ENCODE measurements at regions of chr1 and their contacts with region 1.

Region 1: GRCh38 chr1:214328770-214329469 is 48.0 kb downstream of the SMYD2 start:
- DNase-seq: peak; percentile 82
- CTCF ChIP-seq: peak; percentile 96

Region 2: DNA sequence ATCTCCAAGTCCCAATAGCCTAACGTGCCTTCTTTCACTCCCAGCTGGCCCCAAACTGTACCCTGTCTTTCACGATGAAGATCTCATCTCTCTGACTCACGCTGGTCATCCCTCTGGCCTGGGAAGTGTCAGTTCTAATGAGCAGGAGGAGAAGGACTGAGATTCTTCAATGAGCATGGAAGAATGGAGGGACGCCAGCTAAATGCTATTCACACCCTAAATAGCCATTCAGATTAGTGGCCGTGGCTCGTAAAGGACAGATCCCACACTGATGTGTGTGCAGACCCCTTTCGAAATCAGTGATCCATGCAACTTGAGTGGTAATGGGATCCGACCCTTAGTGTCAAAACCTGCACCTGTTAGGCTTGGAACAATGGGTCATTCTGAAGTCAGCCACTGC is 123.9 kb before region 1 on chr1:
- CTCF ChIA-PET with region 1: interaction called, 30 read pairs
- POLR2A ChIA-PET with region 1: no interaction called
- DNase-seq: no peak
- CTCF ChIP-seq: no peak

Region 3: GRCh38 chr1:214261206-214262123 is 67.5 kb before region 1 on chr1:
- CTCF ChIA-PET with region 1: interaction called, 452 read pairs
- POLR2A ChIA-PET with region 1: no interaction called
- DNase-seq: peak; percentile 70
- CTCF ChIP-seq: peak; percentile 89

Region 4: DNA sequence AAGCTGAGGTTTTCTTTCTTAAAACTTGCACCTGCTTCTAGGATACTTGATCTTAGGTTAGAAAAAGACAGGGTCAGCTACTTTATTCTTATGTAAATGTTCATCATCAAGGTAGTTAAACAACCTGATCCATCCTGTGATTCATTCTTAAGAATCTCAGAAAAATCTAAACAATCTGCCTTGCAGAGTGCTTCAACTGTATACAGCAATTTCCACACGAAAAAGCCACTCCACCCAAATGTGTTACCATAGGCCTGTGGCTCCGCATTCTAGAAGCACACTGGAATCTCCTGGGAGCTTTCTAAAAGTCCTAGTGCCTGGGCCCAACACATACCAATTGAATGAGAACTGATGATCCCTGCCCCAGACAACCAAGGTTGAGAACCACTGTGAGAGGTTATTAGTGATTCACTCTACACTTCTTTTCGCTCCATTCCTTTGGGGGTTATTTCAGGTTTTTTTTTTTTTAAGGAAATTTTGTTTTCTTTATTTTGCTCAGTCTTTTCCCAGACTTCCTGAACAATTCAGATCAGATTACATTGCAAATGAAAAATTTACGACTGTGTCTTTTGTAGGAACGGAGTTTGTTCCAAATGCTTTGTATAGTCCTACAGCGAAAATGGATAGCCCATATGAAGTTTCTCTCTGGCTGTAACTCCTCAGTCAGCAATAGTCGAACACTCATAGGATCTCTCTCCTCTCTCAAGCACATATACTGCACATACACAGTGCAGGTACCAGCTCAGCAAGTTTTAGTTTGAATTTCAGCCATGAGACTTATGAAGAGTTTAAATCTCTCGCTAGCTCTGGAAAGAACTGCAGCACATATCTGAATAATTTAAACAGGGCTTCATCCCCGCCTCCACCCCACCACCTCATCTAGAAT is 31.8 kb before region 1 on chr1:
- CTCF ChIA-PET with region 1: interaction called, 13 read pairs
- POLR2A ChIA-PET with region 1: no interaction called
- DNase-seq: no peak
- CTCF ChIP-seq: no peak

Region 5: GRCh38 chr1:214377485-214377884 is 48.6 kb after region 1 on chr1:
- CTCF ChIA-PET with region 1: interaction called, 10 read pairs
- POLR2A ChIA-PET with region 1: no interaction called
- DNase-seq: no peak
- CTCF ChIP-seq: no peak

Region 6: GRCh38 chr1:214473387-214473786 is 144.5 kb after region 1 on chr1:
- CTCF ChIA-PET with region 1: no interaction called
- POLR2A ChIA-PET with region 1: no interaction called
- DNase-seq: no peak
- CTCF ChIP-seq: no peak

Region 7: GRCh38 chr1:214590696-214591095 is 261.8 kb after region 1 on chr1:
- CTCF ChIA-PET with region 1: interaction called, 144 read pairs
- POLR2A ChIA-PET with region 1: no interaction called
- DNase-seq: no peak
- CTCF ChIP-seq: no peak

Region 8: GRCh38 chr1:215526553-215527151 is 1197.7 kb after region 1 on chr1:
- CTCF ChIA-PET with region 1: interaction called, 69 read pairs
- POLR2A ChIA-PET with region 1: no interaction called
- DNase-seq: peak; percentile 28
- CTCF ChIP-seq: peak; percentile 43

Measured in GM10248 (cell line).